Caco-2 (cell line): ENCODE measurements at regions of chr13 and their contacts with region 1.

Region 1: DNA sequence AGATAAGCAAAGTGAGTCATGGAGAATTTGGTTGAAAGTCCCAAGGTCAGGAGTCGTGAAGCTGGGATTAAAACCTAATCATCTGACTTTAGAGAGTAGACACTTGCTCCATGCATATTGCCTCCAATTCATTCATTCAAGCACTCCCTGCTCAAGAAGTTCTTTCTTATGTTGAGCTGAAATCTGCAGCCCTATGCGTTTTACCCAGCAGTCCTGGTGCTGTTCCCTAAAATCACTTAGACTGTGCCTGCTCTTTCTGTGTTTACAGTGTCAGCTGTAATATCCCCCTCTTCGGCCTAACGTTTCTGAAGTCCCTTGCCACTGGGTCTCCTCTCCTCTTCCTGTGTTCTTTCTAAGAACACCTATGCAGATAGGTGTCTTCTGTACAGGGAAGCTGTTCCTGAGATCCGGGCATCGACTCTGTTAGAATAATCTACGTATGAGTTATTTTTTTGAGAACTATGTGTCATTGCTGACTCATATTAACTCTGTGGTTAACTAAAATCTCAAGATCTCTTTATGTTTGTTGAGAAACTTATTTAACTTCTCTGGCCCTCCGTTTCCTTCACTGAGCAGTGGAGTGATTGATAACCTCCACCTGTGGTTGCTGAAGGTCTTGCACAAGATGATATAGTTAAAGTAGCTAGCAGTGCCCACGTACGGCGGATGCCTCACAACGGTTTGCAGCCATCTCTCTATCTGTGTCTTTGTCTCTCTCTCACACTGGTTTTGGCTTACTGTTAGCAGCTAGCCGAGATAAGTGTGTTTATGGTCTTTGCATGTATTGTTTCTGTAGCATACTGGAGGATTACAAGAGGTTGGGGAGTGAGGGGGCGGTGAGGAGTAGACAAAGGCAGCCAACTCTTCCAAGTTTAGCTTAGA is 4.7 kb downstream of the ALOX5AP start:
- DNase-seq: peak in 1 of 2 experiments; percentile 14
- H3K4me3 ChIP-seq: no peak overlapping the region
- H3K4me3 Mint-ChIP-seq: no peak overlapping the region
- H3K27ac Mint-ChIP-seq: peak overlapping the region; percentile 22
- H3K4me1 ChIP-seq: peaks cover 38% of the 10 kb centered on the region
- H3K4me1 Mint-ChIP-seq: peaks cover 32% of the 10 kb centered on the region
- H3K27me3 ChIP-seq: no peaks in the 10 kb centered on the region
- H3K27me3 Mint-ChIP-seq: no peaks in the 10 kb centered on the region
- CTCF ChIP-seq: no peak

Region 2: GRCh38 chr13:30711375-30711774 is 28.6 kb before region 1 on chr13:
- CTCF ChIA-PET with region 1: no interaction called
- POLR2A ChIA-PET with region 1: no interaction called
- intact Hi-C with region 1: loop called (anchors 5 kb)
- DNase-seq: no peak
- H3K4me3 ChIP-seq: no peak overlapping the region
- H3K4me3 Mint-ChIP-seq: no peak overlapping the region
- H3K27ac Mint-ChIP-seq: no peak overlapping the region
- H3K4me1 ChIP-seq: 0 out of 2 replicates have a peak, but pooled peaks cover 7% of the 10 kb centered on the region
- H3K4me1 Mint-ChIP-seq: peaks cover 6% of the 10 kb centered on the region
- H3K27me3 ChIP-seq: no peaks in the 10 kb centered on the region
- H3K27me3 Mint-ChIP-seq: no peaks in the 10 kb centered on the region
- CTCF ChIP-seq: no peak